Ovary (tissue), 10 donors: ENCODE measurements at regions of chr10 and their contacts with region 1.

Region 1: GRCh38 chr10:20521186-20521585 is 375.9 kb downstream of the NEBL start:
- DNase-seq: no peak
- H3K4me3 ChIP-seq: no peak overlapping the region
- H3K27ac ChIP-seq: no peak overlapping the region
- H3K4me1 ChIP-seq: no peaks in the 10 kb centered on the region
- H3K27me3 ChIP-seq: no peaks in the 10 kb centered on the region
- CTCF ChIP-seq: no peak
- EP300 ChIP-seq: no peak
- POLR2A ChIP-seq: no peak

Region 2: GRCh38 chr10:19385846-19386465 is 1135.2 kb before region 1 on chr10:
- intact Hi-C with region 1: loop called in 1 of 4 experiments (anchors 5 kb)
- DNase-seq: no peak
- H3K4me3 ChIP-seq: no peak overlapping the region
- H3K27ac ChIP-seq: no peak overlapping the region
- H3K4me1 ChIP-seq: no peaks in the 10 kb centered on the region
- H3K27me3 ChIP-seq: no peaks in the 10 kb centered on the region
- CTCF ChIP-seq: no peak
- EP300 ChIP-seq: no peak
- POLR2A ChIP-seq: no peak